ENCODE measurements at regions of chr21 and their contacts with region 1.

Region 1: GRCh38 chr21:29849735-29850176 is 90.0 kb downstream of the GRIK1 start:
- DNase-seq: peak; percentile 51
- ATAC-seq: peak; percentile 86
- H3K4me3 ChIP-seq: no peak overlapping the region
- H3K4me3 Mint-ChIP-seq: no peak overlapping the region
- H3K27ac ChIP-seq: no peak overlapping the region
- H3K27ac Mint-ChIP-seq: no peak overlapping the region
- H3K4me1 ChIP-seq: no peaks in the 10 kb centered on the region
- H3K4me1 Mint-ChIP-seq: no peaks in the 10 kb centered on the region
- H3K27me3 ChIP-seq: peaks cover 0 to 3% (median 0%) of the 10 kb centered on the region in 4 experiments
- H3K27me3 Mint-ChIP-seq: peaks cover 16% of the 10 kb centered on the region
- CTCF ChIP-seq: peak; percentile 79

Region 2: DNA sequence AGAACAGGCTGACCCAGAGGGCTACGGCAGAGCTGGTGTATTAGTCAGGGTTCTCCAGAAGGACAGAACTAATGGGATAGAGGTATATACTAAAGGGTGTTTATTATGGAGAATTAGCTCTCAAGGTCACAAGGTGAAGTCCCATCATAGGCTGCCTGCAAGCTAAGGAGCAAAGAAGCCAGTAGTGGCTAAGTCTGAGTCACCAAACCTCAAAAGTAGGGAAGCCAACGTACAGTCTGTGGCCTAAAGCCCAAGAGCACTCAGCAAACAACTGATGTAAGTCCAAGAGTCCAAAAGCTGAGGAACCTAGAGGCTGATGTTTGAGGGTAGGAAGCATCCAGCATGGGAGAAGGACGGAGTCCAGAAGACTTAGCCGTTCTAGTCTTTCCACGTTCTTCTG is 371.8 kb before region 1 on chr21:
- CTCF ChIA-PET with region 1: interaction called, 24 read pairs
- POLR2A ChIA-PET with region 1: no interaction called
- intact Hi-C with region 1: no loop called
- DNase-seq: no peak
- ATAC-seq: no peak
- H3K4me3 ChIP-seq: no peak overlapping the region
- H3K4me3 Mint-ChIP-seq: no peak overlapping the region
- H3K27ac ChIP-seq: no peak overlapping the region
- H3K27ac Mint-ChIP-seq: no peak overlapping the region
- H3K4me1 ChIP-seq: peaks cover 0 to 5% of the 10 kb centered on the region in 2 donors
- H3K4me1 Mint-ChIP-seq: peaks cover 8% of the 10 kb centered on the region
- H3K27me3 ChIP-seq: no peaks in the 10 kb centered on the region
- H3K27me3 Mint-ChIP-seq: no peaks in the 10 kb centered on the region
- CTCF ChIP-seq: no peak